AG04450 (cell line): ENCODE measurements at regions of chr4 and their contacts with region 1.

Region 1: GRCh38 chr4:26410385-26411293 is 79.6 kb downstream of the CCKAR start:
- DNase-seq: no peak
- H3K4me3 ChIP-seq: no peak overlapping the region
- H3K27ac ChIP-seq: no peak overlapping the region
- H3K27me3 ChIP-seq: no peaks in the 10 kb centered on the region
- CTCF ChIP-seq: peak; percentile 61

Region 2: DNA sequence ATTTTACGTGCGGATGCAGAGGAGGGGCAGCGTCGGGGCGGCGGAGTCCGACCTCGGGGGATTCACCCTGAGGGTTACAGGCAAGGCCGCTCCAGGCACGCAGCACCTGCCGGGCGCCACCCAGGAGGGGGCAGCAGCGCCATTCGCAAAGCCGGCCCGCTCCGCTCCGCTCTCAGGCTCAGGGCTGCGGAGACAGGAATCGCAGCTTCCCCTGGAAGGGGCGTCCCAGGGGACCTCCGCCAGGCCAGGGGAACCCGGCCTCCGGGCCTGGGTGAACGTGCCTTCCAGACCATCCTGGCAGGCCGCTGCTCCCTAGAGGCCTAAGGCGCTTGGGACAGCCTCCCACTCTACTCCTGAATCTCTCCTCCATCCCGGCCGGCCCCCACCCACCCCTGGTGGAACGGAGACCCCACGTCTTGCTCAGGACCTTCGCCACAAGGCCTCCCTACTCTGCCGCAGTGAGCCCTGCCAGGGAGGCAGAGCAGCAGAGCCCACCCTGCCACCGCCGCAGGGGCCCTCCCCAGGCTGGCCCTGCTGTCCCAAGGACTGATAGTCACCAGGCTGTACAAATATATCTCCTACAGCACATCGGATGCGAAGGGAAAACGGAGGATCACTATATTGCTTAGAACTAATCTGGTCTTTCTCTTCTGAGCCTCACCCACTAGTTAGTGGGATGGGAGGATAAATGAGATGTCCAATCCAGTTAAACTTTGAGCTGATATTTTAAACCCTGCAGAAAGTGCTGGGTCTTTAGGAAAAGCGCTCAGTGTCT is 381.7 kb before region 1 on chr4:
- CTCF ChIA-PET with region 1: interaction called, 39 read pairs
- POLR2A ChIA-PET with region 1: no interaction called
- DNase-seq: peak; percentile 23
- H3K4me3 ChIP-seq: 0 out of 2 replicates have a peak overlapping the region, but pooled peaks have one; percentile 10
- H3K27ac ChIP-seq: no peak overlapping the region
- H3K27me3 ChIP-seq: no peaks in the 10 kb centered on the region
- CTCF ChIP-seq: peak; percentile 88